ENCODE measurements at regions of chr15 and their contacts with region 1.

Region 1: GRCh38 chr15:33067941-33068481 is 126.5 kb downstream of the FMN1 start:
- DNase-seq: no peak
- H3K4me3 ChIP-seq: no peak overlapping the region
- H3K27ac ChIP-seq: no peak overlapping the region
- H3K4me1 ChIP-seq: peaks cover 4% of the 10 kb centered on the region
- H3K27me3 ChIP-seq: peaks cover 3% of the 10 kb centered on the region in 2 experiments
- CTCF ChIP-seq: no peak
- POLR2A ChIP-seq: no peak

Region 2: DNA sequence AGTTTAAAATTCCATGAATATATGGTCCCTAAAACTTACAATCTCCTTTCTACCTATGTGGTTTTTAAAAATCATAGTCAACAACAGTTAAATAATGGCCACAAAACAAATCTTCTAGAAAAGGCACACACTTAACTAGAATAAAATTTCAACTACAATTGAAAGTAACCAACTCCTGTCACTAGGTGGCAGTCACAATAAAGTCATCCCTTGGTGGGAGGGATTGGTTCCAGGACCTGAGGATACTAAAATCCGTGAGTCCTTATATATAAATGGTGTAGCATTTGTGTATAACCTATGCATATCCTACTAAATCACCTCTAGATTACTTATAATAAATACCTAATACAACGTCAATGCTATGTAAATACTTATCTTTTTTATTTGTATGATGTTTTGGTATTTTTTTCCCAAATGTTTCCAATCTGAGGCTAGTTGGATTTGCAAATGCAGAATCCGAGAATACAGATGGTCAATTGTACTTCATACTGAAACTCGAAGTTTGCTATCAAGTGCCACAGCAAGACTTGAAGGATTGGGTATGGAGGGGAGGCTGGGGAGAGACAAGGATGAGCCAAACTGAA is 46.1 kb before region 1 on chr15:
- CTCF ChIA-PET with region 1: no interaction called
- POLR2A ChIA-PET with region 1: no interaction called
- dilution Hi-C with region 1: no loop called
- intact Hi-C with region 1: loop called (anchors 5 kb)
- DNase-seq: peak; percentile 71
- H3K4me3 ChIP-seq: no peak overlapping the region
- H3K27ac ChIP-seq: peak overlapping the region; percentile 60
- H3K4me1 ChIP-seq: peaks cover 10% of the 10 kb centered on the region
- H3K27me3 ChIP-seq: no peaks in the 10 kb centered on the region
- CTCF ChIP-seq: peak; percentile 45 to 51
- POLR2A ChIP-seq: no peak

Region 3: DNA sequence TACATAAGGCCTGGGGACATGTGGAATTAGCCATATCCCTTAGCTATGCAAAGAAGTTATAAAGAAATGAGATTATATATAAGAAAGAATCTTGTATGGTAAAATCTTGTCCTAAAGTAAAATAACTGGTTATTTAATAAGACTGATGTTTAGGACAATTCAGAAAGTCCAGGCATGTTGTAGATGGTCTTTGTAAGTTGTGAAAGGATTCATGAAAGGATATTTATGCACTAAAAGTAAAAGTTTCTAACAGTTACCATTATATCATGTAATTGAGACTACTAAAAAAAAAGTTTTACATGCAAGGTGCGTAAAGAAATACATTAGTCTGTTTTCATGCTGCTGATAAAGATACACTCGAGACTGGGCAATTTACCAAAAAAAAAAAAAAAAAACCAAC is 19.8 kb before region 1 on chr15:
- CTCF ChIA-PET with region 1: no interaction called
- POLR2A ChIA-PET with region 1: no interaction called
- dilution Hi-C with region 1: no loop called
- intact Hi-C with region 1: loop called (anchors 2 kb)
- DNase-seq: no peak
- H3K4me3 ChIP-seq: no peak overlapping the region
- H3K27ac ChIP-seq: no peak overlapping the region
- H3K4me1 ChIP-seq: no peaks in the 10 kb centered on the region
- H3K27me3 ChIP-seq: peaks cover 0 to 2% of the 10 kb centered on the region in 2 experiments
- CTCF ChIP-seq: no peak
- POLR2A ChIP-seq: no peak